Left colon (tissue), 2 donors: ENCODE measurements at regions of chr14 and their contacts with region 1.

Region 1: GRCh38 chr14:37874429-37875191 is 279.2 kb downstream of the TTC6 start:
- DNase-seq: peak; percentile 72 to 90
- ATAC-seq: peak; percentile 98

Region 2: GRCh38 chr14:37246427-37246914 is 628.1 kb before region 1 on chr14:
- intact Hi-C with region 1: loop called in 1 of 2 experiments (anchors 10 kb)
- DNase-seq: no peak
- ATAC-seq: peak; percentile 67

Region 3: GRCh38 chr14:37709419-37710195 is 165.0 kb before region 1 on chr14:
- intact Hi-C with region 1: loop called in 1 of 2 experiments (anchors 5 kb)
- DNase-seq: no peak
- ATAC-seq: no peak

Region 4: DNA sequence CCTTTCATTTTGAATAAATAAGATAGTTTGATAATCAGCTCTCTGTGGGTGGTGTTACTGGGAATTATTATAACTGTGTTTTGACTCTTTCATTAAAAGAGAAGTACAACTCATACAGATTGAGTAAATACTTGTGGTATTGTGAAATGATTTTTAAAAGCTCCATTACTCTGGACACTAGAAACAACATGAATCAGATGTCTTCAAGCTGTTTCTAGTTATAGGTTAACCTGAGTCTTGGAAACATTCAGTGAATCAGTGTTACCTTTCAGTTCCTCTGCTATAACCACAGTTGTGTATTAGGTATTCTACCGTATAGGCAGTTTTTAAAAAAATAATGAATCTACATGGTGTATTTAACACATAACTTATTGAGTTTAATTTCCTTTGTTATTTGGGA is 204.7 kb after region 1 on chr14:
- intact Hi-C with region 1: no loop called
- DNase-seq: no peak
- ATAC-seq: no peak

Region 5: DNA sequence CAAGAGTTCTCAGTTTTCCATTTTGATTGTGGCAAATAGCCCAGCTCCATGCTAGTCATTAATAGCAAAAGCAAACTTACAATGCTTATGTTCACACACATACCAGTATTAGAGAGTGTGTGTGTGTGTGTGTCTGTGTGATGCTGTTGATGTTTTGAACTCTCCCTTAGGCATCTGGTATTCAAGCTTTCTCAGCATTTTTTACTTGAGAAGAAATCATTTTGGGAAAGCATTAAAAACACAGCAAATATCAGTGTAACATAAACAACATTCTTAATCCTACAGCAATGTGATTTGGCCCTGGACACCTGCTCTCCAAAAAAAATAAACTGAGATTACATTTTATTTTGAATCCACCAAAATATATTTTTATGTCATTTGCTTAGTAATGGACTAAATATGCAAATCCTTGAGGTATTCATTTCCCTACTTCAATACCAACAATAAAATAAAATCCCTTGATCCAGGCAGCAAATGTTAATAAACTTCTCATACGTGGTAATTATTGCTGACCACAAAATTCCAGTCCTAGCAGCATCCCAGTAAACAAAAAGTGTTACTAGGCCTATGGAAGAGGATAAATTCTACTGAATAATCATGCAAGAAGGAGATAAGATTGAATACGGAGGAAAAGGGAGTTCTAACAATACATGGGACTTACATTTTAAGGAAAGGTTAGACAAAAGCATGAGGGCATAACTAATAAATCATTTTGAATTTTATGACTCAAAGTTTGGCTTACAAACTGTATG is 630.8 kb after region 1 on chr14:
- intact Hi-C with region 1: no loop called
- DNase-seq: no peak
- ATAC-seq: no peak